ENCODE measurements at regions of chr5 and their contacts with region 1.

Region 1: GRCh38 chr5:110757118-110757729 is 18.4 kb downstream of the SLC25A46 start:
- DNase-seq: peak; percentile 67
- H3K4me3 Mint-ChIP-seq: no peak overlapping the region
- H3K27ac Mint-ChIP-seq: no peak overlapping the region
- H3K4me1 Mint-ChIP-seq: peaks cover 14% of the 10 kb centered on the region
- H3K27me3 Mint-ChIP-seq: no peaks in the 10 kb centered on the region
- CTCF ChIP-seq: peak; percentile 54

Region 2: DNA sequence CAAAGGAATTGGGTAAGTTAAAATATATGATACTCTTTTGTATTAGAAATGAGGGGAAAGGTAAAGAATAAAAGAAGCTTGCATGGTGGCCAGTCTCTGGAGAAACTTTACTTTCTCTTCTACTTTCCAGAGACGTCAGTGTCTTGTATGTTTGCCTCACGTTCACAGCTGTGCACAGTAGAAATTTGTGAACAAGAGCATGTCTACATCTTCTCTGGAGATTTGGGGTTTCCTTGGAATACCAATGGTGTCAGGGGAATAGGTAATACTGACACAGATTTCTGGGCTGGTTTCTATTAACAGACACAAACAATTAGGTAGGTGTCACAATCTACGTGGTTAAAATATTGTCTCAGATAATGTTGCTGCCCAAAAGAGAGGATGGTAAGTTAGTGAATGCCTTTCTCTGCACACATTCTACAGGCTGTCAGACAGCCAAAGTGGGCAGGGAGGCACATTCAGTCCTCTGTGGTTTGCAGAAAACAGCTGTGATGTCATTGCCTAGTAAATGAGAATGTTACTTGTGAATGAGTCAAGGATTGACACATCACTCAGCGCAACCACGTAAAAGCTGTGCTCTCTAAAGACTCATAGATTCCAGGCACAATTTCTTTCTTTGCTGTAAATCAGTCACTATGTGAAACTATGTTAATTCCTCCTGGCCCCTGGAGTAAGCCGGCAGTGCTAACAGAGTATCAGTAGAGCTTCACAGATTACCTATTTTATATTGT is 670.4 kb before region 1 on chr5:
- CTCF ChIA-PET with region 1: no interaction called
- POLR2A ChIA-PET with region 1: no interaction called
- intact Hi-C with region 1: no loop called
- DNase-seq: peak; percentile 97
- H3K4me3 Mint-ChIP-seq: peak overlapping the region; percentile 59
- H3K27ac Mint-ChIP-seq: peak overlapping the region; percentile 92
- H3K4me1 Mint-ChIP-seq: peaks cover 18% of the 10 kb centered on the region
- H3K27me3 Mint-ChIP-seq: no peaks in the 10 kb centered on the region
- CTCF ChIP-seq: no peak

Region 3: DNA sequence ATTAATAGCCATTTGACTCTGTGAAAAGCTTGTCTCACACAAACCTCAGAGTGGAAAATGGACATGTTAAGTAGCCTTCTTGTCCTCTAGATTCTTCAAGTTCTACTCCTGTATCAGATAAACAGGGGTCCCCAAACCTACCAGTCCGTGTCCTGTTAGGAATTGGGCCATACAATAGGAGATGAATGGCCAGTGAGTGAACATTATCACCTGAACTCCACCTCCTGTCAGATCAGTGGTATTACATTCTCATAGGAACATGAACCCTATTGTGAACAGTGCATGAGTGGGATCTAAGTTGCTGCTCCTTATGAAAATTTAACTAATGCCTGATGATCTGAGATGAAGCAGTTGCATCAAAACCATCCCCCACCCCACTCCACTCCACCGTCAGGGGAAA is 167.0 kb before region 1 on chr5:
- CTCF ChIA-PET with region 1: no interaction called
- POLR2A ChIA-PET with region 1: no interaction called
- intact Hi-C with region 1: no loop called
- DNase-seq: peak; percentile 45
- H3K4me3 Mint-ChIP-seq: no peak overlapping the region
- H3K27ac Mint-ChIP-seq: no peak overlapping the region
- H3K4me1 Mint-ChIP-seq: no peaks in the 10 kb centered on the region
- H3K27me3 Mint-ChIP-seq: peaks cover 35% of the 10 kb centered on the region
- CTCF ChIP-seq: peak; percentile 56

Region 4: DNA sequence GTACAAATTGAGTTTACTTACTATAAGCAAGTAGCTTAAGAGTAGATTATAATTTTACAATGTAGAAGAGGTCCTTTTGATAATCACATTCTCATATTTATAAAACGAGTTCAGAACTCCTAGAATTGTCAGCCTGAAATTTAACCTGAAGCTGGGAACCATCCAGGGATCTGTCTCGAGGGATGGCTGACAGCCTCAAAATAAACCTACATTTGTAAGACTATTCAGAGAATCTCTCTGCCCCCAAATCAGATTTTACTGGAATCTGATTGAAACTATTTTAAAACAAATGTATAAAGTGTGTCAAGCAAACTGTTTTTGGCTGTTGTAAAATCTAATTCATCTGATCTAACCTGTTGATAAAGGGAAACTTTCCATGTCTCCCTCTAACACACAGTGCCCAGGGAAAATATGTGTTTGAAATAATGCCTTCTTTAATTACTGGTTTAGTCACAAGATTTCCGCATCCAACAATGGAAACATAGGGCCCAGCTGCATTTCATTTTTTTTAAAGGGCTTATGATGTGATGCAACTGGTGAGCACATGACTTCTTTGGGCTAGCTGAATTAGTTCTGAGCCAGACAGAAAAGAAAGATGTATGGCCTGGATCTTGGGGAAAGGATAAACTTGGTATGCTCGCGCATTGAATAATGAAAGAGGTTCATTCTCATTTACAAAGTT is 11.9 kb after region 1 on chr5:
- CTCF ChIA-PET with region 1: interaction called, 16 read pairs
- POLR2A ChIA-PET with region 1: no interaction called
- intact Hi-C with region 1: no loop called
- DNase-seq: peak; percentile 27
- H3K4me3 Mint-ChIP-seq: no peak overlapping the region
- H3K27ac Mint-ChIP-seq: no peak overlapping the region
- H3K4me1 Mint-ChIP-seq: peaks cover 19% of the 10 kb centered on the region
- H3K27me3 Mint-ChIP-seq: no peaks in the 10 kb centered on the region
- CTCF ChIP-seq: no peak

Region 5: GRCh38 chr5:110865400-110866094 is 108.3 kb after region 1 on chr5:
- CTCF ChIA-PET with region 1: interaction called, 5 read pairs
- POLR2A ChIA-PET with region 1: no interaction called
- intact Hi-C with region 1: loop called (anchors 2 kb)
- DNase-seq: peak; percentile 76
- H3K4me3 Mint-ChIP-seq: no peak overlapping the region
- H3K27ac Mint-ChIP-seq: no peak overlapping the region
- H3K4me1 Mint-ChIP-seq: no peaks in the 10 kb centered on the region
- H3K27me3 Mint-ChIP-seq: peaks cover 14% of the 10 kb centered on the region
- CTCF ChIP-seq: peak; percentile 42

Region 6: GRCh38 chr5:111063700-111064322 is 306.6 kb after region 1 on chr5:
- CTCF ChIA-PET with region 1: interaction called, 13 read pairs
- POLR2A ChIA-PET with region 1: no interaction called
- intact Hi-C with region 1: loop called (anchors 1 kb)
- DNase-seq: peak; percentile 58
- H3K4me3 Mint-ChIP-seq: no peak overlapping the region
- H3K27ac Mint-ChIP-seq: no peak overlapping the region
- H3K4me1 Mint-ChIP-seq: peaks cover 6% of the 10 kb centered on the region
- H3K27me3 Mint-ChIP-seq: no peaks in the 10 kb centered on the region
- CTCF ChIP-seq: peak; percentile 50

Region 7: GRCh38 chr5:111092062-111092853 is 335.0 kb after region 1 on chr5 and contains the start of gene WDR36:
- CTCF ChIA-PET with region 1: interaction called, 3 read pairs
- POLR2A ChIA-PET with region 1: interaction called, 5 read pairs
- intact Hi-C with region 1: loop called (anchors 1 kb)
- DNase-seq: peak; percentile 94
- H3K4me3 Mint-ChIP-seq: peak within 1 kb of the TSS; percentile 96
- H3K27ac Mint-ChIP-seq: peak within 1 kb of the TSS; percentile 85
- H3K4me1 Mint-ChIP-seq: peaks cover 22% of the 10 kb centered on the region
- H3K27me3 Mint-ChIP-seq: no peaks in the 10 kb centered on the region
- CTCF ChIP-seq: no peak
- total RNA-seq, gene WDR36: 43.8 and 52.3 TPM in 2 replicates

Region 8: GRCh38 chr5:111143910-111144309 is 386.7 kb after region 1 on chr5:
- CTCF ChIA-PET with region 1: no interaction called
- POLR2A ChIA-PET with region 1: no interaction called
- intact Hi-C with region 1: loop called (anchors 5 kb)
- DNase-seq: peak; percentile 87
- H3K4me3 Mint-ChIP-seq: no peak overlapping the region
- H3K27ac Mint-ChIP-seq: no peak overlapping the region
- H3K4me1 Mint-ChIP-seq: peaks cover 9% of the 10 kb centered on the region
- H3K27me3 Mint-ChIP-seq: no peaks in the 10 kb centered on the region
- CTCF ChIP-seq: no peak

Region 9: DNA sequence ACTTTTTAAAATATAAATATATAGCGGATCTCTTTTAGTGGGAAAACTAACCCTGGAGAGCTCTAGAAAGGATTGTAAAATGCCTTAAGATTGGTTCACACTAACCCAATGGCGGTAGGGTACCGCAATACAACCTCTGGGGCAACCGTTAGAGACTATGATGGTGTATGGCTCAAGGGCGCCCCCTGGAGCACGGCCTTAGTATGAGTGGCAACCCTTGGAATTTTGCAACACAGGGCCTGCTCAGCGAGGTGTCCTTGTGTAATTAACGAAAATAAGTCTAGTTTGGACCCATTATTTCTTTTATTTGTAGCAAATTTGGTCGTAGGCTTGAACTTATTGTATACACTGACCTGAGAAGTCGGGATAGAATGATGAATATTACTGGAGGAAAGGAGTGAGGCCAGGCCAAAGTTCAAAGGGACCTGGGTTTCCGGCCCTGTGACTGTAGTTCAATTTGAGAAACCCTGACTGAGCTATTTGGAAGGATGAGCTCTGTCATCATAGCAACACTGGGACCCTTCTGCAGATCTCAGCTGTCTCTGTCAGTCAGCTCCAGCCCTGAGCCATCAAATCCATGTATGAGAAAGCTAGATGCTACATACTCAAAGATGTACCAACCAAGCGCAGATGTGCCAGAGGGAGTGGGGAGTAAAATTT is 521.8 kb after region 1 on chr5:
- CTCF ChIA-PET with region 1: interaction called, 3 read pairs
- POLR2A ChIA-PET with region 1: no interaction called
- intact Hi-C with region 1: loop called (anchors 2 kb)
- DNase-seq: peak; percentile 74
- H3K4me3 Mint-ChIP-seq: no peak overlapping the region
- H3K27ac Mint-ChIP-seq: no peak overlapping the region
- H3K4me1 Mint-ChIP-seq: no peaks in the 10 kb centered on the region
- H3K27me3 Mint-ChIP-seq: peaks cover 18% of the 10 kb centered on the region
- CTCF ChIP-seq: peak; percentile 84

Measured in MCF 10A (cell line).